ENCODE measurements at regions of chr2 and their contacts with region 1.

Region 1: GRCh38 chr2:96856776-96857673 is 791 bp downstream of the ANKRD39 start:
- DNase-seq: peak in 1 of 2 experiments; percentile 73
- H3K4me3 ChIP-seq: peak overlapping the region; percentile 49 to 75 (median 68)
- H3K27ac ChIP-seq: no peak overlapping the region; the same call in 1 of the 2 replicates
- H3K4me1 ChIP-seq: peaks cover 3 to 11% (median 8%) of the 10 kb centered on the region in 4 experiments
- H3K27me3 ChIP-seq: no peaks in the 10 kb centered on the region
- CTCF ChIP-seq: no peak
- EP300 ChIP-seq: no peak
- POLR2A ChIP-seq: peak in 1 of 2 experiments; percentile 63; a peak in 2 of 3 replicates
- RAD21 ChIP-seq: no peak

Region 2: GRCh38 chr2:96832754-96833507 is 24.1 kb before region 1 on chr2:
- CTCF ChIA-PET with region 1: interaction called, 22 read pairs
- POLR2A ChIA-PET with region 1: interaction called, 16 read pairs
- DNase-seq: peak in 1 of 2 experiments; percentile 86
- H3K4me3 ChIP-seq: peak overlapping the region; percentile 5 to 50 (median 18); a peak in 7 of 8 replicates
- H3K27ac ChIP-seq: peak overlapping the region; percentile 69
- H3K4me1 ChIP-seq: peaks cover 3 to 18% (median 13%) of the 10 kb centered on the region in 4 experiments
- H3K27me3 ChIP-seq: no peaks in the 10 kb centered on the region
- CTCF ChIP-seq: no peak
- EP300 ChIP-seq: no peak
- POLR2A ChIP-seq: no peak; a peak in 1 of 3 replicates
- RAD21 ChIP-seq: no peak

Region 3: GRCh38 chr2:96868555-96869280 is 11.7 kb after region 1 on chr2:
- CTCF ChIA-PET with region 1: interaction called, 48 read pairs
- POLR2A ChIA-PET with region 1: interaction called, 49 read pairs
- DNase-seq: peak; percentile 43 to 86
- H3K4me3 ChIP-seq: peak overlapping the region; percentile 76 to 86 (median 80)
- H3K27ac ChIP-seq: peak overlapping the region; percentile 91
- H3K4me1 ChIP-seq: peaks cover 11 to 28% (median 18%) of the 10 kb centered on the region in 4 experiments
- H3K27me3 ChIP-seq: peaks cover 0 to 3% (median 0%) of the 10 kb centered on the region in 4 experiments; a peak in 2 of 7 replicates
- CTCF ChIP-seq: peak in 2 of 3 experiments; percentile 50 to 52; a peak in 3 of 4 replicates
- EP300 ChIP-seq: no peak
- POLR2A ChIP-seq: peak in 1 of 2 experiments; percentile 81; a peak in 2 of 3 replicates
- RAD21 ChIP-seq: peak; percentile 8 to 44; a peak in 2 of 4 replicates

Region 4: DNA sequence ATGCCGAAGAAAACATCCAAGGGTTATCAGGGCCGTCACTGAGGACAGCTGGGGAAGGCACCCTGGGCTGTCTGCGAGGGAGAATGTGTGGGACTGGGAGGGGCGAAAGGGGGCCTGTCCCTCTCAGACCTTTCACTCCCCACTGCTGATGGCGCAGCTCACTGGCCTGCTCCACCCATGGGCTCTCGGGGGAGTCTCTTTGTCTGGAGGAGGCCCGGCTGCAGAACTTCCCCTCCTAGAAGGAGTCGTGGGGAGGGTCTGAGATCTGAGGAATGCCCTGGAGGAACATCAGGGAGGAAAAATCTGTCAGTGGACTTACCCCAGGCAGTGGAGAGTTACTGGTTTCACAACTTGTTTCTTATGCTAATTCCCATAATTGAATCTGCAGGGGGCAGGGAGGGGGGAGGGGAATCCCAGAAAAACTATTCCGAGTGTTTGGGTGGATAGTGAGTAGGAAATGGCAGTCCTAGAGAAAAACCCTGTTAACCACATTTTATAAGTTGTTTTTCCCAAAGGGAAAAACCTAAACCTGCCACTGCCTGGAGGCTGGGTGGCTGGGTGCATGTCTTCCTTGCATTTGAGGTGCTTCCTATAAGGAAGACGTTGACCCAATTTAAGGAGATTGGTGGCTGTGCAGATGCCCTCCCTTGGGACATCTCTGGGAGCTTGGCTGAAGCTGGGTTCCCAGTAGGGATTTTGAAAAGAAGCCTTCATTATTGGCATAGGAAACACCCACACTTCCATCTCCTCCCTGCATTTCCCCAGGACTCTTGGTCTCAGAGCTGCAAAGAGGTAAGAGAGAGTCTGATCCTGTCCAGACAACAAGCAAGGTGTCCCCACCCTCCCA is 24.5 kb after region 1 on chr2:
- CTCF ChIA-PET with region 1: interaction called, 48 read pairs
- POLR2A ChIA-PET with region 1: interaction called, 19 read pairs
- DNase-seq: peak in 1 of 2 experiments; percentile 53
- H3K4me3 ChIP-seq: peak overlapping the region in 2 of 4 experiments; percentile 7 to 36; a peak in 4 of 8 replicates
- H3K27ac ChIP-seq: 0 out of 2 replicates have a peak overlapping the region, but pooled peaks have one; percentile 8
- H3K4me1 ChIP-seq: peaks cover 3 to 27% (median 15%) of the 10 kb centered on the region in 4 experiments
- H3K27me3 ChIP-seq: peaks cover 0 to 2% (median under 1%) of the 10 kb centered on the region in 4 experiments; a peak in 2 of 7 replicates
- CTCF ChIP-seq: no peak
- EP300 ChIP-seq: no peak
- POLR2A ChIP-seq: no peak
- RAD21 ChIP-seq: no peak

Region 5: DNA sequence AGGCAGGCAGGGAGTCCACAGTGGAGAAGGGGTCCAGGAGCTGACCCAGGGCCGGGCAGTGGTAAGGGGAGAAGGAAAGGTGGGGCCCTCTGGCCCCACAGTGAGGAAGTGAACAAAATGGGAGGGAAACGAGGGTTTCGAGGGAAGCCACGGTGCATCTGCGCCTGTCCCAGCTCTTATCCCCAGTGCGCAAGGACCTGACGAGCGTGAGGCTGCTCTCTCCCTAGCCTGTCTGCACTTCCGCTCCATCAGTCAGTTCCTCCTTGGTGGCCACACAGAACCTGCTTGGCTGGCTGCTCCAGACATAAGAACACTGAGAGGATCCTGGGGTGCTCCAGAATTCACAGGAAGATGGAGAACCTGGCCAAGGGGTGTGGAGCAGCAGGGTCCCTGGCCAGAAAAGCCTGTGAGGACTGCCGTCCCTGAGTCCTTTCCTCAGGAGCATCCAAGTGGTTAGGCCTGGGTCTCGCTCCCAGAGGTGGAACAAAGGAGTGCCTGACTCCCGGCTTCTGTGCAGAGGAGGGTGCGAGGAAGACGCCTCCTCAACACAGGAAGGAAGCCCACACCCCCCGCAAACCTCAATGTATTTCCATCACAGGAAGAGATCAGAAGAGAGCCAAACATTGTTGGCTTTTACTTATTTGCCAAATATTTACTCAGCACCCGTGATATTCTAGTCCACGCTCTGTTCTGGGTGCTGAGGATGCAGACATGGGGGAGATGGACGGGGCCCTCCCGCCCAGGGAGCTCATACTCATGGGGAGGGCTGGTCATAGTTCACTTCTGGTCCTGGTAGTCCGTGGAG is 56.6 kb after region 1 on chr2:
- CTCF ChIA-PET with region 1: interaction called, 21 read pairs
- POLR2A ChIA-PET with region 1: interaction called, 9 read pairs
- DNase-seq: no peak
- H3K4me3 ChIP-seq: no peak overlapping the region
- H3K27ac ChIP-seq: no peak overlapping the region
- H3K4me1 ChIP-seq: peaks cover 0 to 16% (median 10%) of the 10 kb centered on the region in 4 experiments; a peak in 5 of 7 replicates
- H3K27me3 ChIP-seq: peaks cover 0 to 2% (median 0%) of the 10 kb centered on the region in 4 experiments; a peak in 2 of 7 replicates
- CTCF ChIP-seq: no peak
- EP300 ChIP-seq: no peak
- POLR2A ChIP-seq: no peak
- RAD21 ChIP-seq: no peak

Region 6: DNA sequence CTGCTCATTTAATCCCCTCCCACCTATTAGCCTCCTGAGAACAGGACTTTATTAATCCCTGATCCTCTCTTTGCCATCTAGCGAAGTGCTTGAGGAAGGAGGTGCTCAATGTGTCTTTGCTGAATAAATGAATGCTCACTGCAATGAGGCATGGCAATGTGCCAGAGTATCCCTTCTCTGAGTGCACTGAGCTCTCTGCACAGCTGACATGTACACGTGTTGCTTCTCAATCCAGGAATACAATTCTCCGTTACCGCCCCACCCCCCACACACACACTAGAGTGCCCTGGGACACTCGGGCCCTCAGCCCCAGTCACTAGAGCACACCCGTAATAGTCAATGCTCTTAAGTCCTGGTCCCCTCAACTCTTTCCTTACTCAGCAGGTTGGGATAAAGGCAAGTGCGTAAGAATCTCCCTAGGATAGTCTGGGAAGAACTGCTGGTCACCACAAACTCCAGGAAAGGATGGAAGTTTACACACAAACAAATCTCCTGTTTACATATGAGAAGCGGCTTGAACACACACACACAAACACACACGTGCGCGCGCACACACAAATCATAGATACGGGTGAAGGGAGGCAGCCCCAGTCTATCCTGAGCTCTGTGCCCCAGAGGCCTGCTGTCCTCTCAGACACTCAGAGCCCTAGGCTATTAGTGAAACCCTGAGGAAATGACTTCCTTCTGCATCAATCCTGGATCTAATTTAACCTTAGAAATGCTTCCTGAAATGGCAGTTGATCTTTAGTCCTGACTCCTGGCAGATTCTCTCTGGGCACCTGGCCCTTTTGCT is 88.2 kb after region 1 on chr2:
- CTCF ChIA-PET with region 1: interaction called, 89 read pairs
- POLR2A ChIA-PET with region 1: interaction called, 47 read pairs
- DNase-seq: no peak
- H3K4me3 ChIP-seq: no peak overlapping the region
- H3K27ac ChIP-seq: no peak overlapping the region
- H3K4me1 ChIP-seq: peaks cover 0 to 3% (median 1%) of the 10 kb centered on the region in 4 experiments; a peak in 2 of 7 replicates
- H3K27me3 ChIP-seq: peaks cover 0 to 3% (median under 1%) of the 10 kb centered on the region in 4 experiments; a peak in 3 of 7 replicates
- CTCF ChIP-seq: no peak
- EP300 ChIP-seq: no peak
- POLR2A ChIP-seq: no peak
- RAD21 ChIP-seq: no peak

Region 7: GRCh38 chr2:96960153-96960961 is 103.3 kb after region 1 on chr2:
- CTCF ChIA-PET with region 1: interaction called, 51 read pairs
- POLR2A ChIA-PET with region 1: interaction called, 8 read pairs
- DNase-seq: peak; percentile 82 to 97
- H3K4me3 ChIP-seq: no peak overlapping the region
- H3K27ac ChIP-seq: no peak overlapping the region
- H3K4me1 ChIP-seq: peaks cover 4 to 8% (median 8%) of the 10 kb centered on the region in 4 experiments
- H3K27me3 ChIP-seq: no peaks in the 10 kb centered on the region
- CTCF ChIP-seq: peak; percentile 95 to 99 (median 99)
- EP300 ChIP-seq: no peak
- POLR2A ChIP-seq: no peak
- RAD21 ChIP-seq: peak; percentile 97 to 99